ENCODE measurements at regions of chr14 and their contacts with region 1.

Region 1: GRCh38 chr14:56794557-56795283 is 15.6 kb downstream of the OTX2 start:
- DNase-seq: no peak
- ATAC-seq: no peak
- H3K4me3 ChIP-seq: no peak overlapping the region
- H3K27ac ChIP-seq: no peak overlapping the region
- H3K4me1 ChIP-seq: no peaks in the 10 kb centered on the region
- H3K27me3 ChIP-seq: peaks cover 58% of the 10 kb centered on the region
- CTCF ChIP-seq: no peak
- POLR2A ChIP-seq: no peak
- RAD21 ChIP-seq: no peak

Region 2: DNA sequence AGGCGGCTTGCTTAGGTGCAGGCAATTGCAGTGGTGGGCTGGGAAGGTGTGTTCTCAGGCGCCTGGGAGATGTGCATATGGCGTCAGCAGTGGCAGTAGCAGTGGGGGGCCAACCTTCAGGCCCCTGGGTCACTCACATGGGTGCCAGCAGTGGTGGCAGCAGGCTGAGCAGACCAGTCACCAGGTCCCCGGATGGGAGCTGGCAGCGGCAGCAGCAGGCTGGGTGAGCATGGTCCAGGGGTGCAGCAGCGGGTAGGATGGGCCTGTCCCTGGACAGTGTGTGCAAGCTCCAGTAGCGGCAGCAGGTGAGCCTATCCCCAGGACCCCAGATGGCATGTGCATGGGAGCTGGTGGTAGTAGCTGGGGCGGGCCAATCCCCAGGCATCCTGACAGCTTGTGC is 323.7 kb before region 1 on chr14:
- CTCF ChIA-PET with region 1: no interaction called
- POLR2A ChIA-PET with region 1: no interaction called
- dilution Hi-C with region 1: no loop called
- in situ Hi-C with region 1: no loop called
- intact Hi-C with region 1: no loop called
- DNase-seq: no peak
- ATAC-seq: no peak
- H3K4me3 ChIP-seq: no peak overlapping the region
- H3K27ac ChIP-seq: no peak overlapping the region
- H3K4me1 ChIP-seq: no peaks in the 10 kb centered on the region
- H3K27me3 ChIP-seq: peaks cover 23% of the 10 kb centered on the region
- CTCF ChIP-seq: no peak
- POLR2A ChIP-seq: no peak
- RAD21 ChIP-seq: no peak

Region 3: GRCh38 chr14:56647493-56647892 is 147.2 kb before region 1 on chr14:
- CTCF ChIA-PET with region 1: no interaction called
- POLR2A ChIA-PET with region 1: interaction called, 15 read pairs
- dilution Hi-C with region 1: no loop called
- in situ Hi-C with region 1: no loop called
- intact Hi-C with region 1: no loop called
- DNase-seq: no peak
- ATAC-seq: no peak
- H3K4me3 ChIP-seq: no peak overlapping the region
- H3K27ac ChIP-seq: no peak overlapping the region
- H3K4me1 ChIP-seq: no peaks in the 10 kb centered on the region
- H3K27me3 ChIP-seq: no peaks in the 10 kb centered on the region
- CTCF ChIP-seq: no peak
- POLR2A ChIP-seq: no peak
- RAD21 ChIP-seq: no peak

Region 4: DNA sequence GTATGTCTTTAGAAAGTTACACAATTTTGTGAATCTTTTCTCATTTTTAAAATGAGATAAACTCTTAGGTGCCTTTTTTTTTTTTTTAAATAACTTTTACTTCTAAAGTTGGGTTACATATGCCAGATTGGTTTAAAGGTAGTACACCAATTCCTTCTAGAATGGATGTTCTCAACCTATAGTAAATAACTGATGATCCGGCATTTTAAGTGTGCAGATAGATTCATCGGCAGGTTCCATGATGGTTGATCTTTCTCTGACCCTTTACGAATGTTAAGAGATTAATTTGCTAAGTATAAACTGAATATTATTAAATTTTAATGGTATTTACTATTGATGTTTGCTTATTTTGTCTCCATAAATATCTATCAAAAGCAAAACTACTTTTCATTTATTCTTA is 482.3 kb after region 1 on chr14:
- CTCF ChIA-PET with region 1: no interaction called
- POLR2A ChIA-PET with region 1: no interaction called
- dilution Hi-C with region 1: no loop called
- in situ Hi-C with region 1: no loop called
- intact Hi-C with region 1: no loop called
- DNase-seq: no peak
- ATAC-seq: no peak
- H3K4me3 ChIP-seq: no peak overlapping the region
- H3K27ac ChIP-seq: no peak overlapping the region
- H3K4me1 ChIP-seq: no peaks in the 10 kb centered on the region
- H3K27me3 ChIP-seq: no peaks in the 10 kb centered on the region
- CTCF ChIP-seq: no peak
- POLR2A ChIP-seq: no peak
- RAD21 ChIP-seq: no peak